OCI-LY7 (cell line): ENCODE measurements at regions of chr1 and their contacts with region 1.

Region 1: DNA sequence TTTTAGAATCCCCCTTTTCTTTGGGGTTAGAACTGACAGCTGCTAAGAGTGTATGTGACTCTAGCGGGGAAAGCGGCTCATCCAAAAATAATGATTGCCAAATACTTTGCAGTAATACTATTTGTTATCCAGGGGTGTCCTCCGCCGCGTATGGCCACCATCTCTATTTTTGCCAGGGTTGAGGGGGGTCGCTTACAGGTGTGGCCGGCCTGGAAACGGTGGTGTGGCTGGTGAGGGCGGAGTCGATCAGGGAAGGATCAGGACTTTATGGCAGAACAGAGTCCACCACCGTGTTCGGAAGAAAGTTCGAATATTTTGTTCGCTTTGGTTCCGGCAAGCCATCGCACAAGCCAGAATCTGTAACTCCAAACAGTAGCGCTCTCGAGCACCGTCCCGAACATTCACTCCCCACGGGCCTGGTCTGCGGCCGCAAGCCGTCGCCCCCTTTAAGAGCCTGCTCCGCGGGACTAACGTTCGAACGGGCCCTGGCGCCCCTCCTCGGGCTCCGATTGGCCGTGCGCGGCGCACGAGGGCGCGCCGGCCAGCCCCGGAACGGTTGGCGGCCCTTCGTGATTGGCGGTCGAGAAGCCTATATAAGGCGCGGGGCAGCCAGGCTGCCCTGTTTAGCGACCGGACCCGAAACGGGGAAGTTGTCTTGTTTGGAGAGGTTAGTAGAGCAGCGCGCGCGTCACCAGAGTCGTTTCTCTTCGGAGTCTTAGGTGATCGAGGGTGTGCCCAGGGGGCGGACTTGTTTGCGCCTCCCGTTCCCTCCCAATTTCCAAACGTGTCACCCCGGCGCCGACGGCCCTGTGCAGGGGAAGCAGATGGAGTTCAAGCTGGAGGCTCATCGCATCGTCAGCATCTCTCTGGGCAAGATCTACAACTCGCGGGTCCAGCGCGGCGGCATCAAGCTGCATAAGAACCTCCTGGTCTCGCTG is at the start of gene IER5:
- DNase-seq: peak; percentile 96
- H3K4me3 ChIP-seq: peak within 1 kb of the TSS; percentile 81
- H3K27ac ChIP-seq: peak within 1 kb of the TSS; percentile 75
- H3K4me1 ChIP-seq: peaks cover 27% of the 10 kb centered on the region
- CTCF ChIP-seq: no peak
- total RNA-seq, gene IER5: 14.3 and 18.3 TPM in 2 replicates

Region 2: GRCh38 chr1:181021811-181022434 is 66.4 kb before region 1 on chr1:
- CTCF ChIA-PET with region 1: no interaction called
- POLR2A ChIA-PET with region 1: interaction called, 4 read pairs
- intact Hi-C with region 1: loop called (anchors 2 kb)
- DNase-seq: peak; percentile 61
- H3K4me3 ChIP-seq: peak overlapping the region; percentile 92
- H3K27ac ChIP-seq: peak overlapping the region; percentile 34
- H3K4me1 ChIP-seq: peaks cover 33% of the 10 kb centered on the region
- CTCF ChIP-seq: no peak

Region 3: DNA sequence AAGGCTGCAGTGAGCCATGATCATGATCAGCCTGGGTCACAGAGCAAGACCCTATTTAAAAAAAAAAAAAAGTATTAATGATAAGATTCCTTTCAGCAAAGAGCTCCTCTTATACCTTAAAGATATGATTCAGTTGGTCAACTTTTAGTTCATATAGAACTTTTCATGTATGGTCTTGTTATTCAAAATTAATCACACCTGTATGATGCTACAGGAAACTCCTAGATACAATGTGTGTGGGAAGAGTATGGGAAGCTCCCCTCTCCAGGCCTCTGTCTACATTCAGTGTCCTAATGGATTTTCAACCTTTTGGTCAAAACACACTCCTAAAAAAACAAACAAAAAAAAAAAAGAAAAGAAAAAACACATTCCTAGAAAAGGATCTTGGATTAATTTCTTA is 37.4 kb before region 1 on chr1:
- CTCF ChIA-PET with region 1: no interaction called
- POLR2A ChIA-PET with region 1: no interaction called
- intact Hi-C with region 1: no loop called
- DNase-seq: no peak
- H3K4me3 ChIP-seq: no peak overlapping the region
- H3K27ac ChIP-seq: no peak overlapping the region
- H3K4me1 ChIP-seq: no peaks in the 10 kb centered on the region
- CTCF ChIP-seq: no peak

Region 4: GRCh38 chr1:181105134-181106021 is 17.0 kb after region 1 on chr1:
- CTCF ChIA-PET with region 1: interaction called, 7 read pairs
- POLR2A ChIA-PET with region 1: interaction called, 8 read pairs
- intact Hi-C with region 1: loop called (anchors 1 kb)
- DNase-seq: peak; percentile 87
- H3K4me3 ChIP-seq: peak overlapping the region; percentile 76
- H3K27ac ChIP-seq: no peak overlapping the region
- H3K4me1 ChIP-seq: peaks cover 17% of the 10 kb centered on the region
- CTCF ChIP-seq: no peak

Region 5: GRCh38 chr1:181134543-181135362 is 46.4 kb after region 1 on chr1:
- CTCF ChIA-PET with region 1: interaction called, 3 read pairs
- POLR2A ChIA-PET with region 1: interaction called, 4 read pairs
- intact Hi-C with region 1: loop called (anchors 1 kb)
- DNase-seq: peak; percentile 60
- H3K4me3 ChIP-seq: peak overlapping the region; percentile 24
- H3K27ac ChIP-seq: no peak overlapping the region
- H3K4me1 ChIP-seq: peaks cover 49% of the 10 kb centered on the region
- CTCF ChIP-seq: no peak

Region 6: GRCh38 chr1:181166377-181167196 is 78.2 kb after region 1 on chr1:
- CTCF ChIA-PET with region 1: no interaction called
- POLR2A ChIA-PET with region 1: no interaction called
- intact Hi-C with region 1: loop called (anchors 1 kb)
- DNase-seq: peak; percentile 74
- H3K4me3 ChIP-seq: no peak overlapping the region
- H3K27ac ChIP-seq: no peak overlapping the region
- H3K4me1 ChIP-seq: no peaks in the 10 kb centered on the region
- CTCF ChIP-seq: peak; percentile 90